A549 (cell line): ENCODE measurements at regions of chr1 and their contacts with region 1.

Region 1: DNA sequence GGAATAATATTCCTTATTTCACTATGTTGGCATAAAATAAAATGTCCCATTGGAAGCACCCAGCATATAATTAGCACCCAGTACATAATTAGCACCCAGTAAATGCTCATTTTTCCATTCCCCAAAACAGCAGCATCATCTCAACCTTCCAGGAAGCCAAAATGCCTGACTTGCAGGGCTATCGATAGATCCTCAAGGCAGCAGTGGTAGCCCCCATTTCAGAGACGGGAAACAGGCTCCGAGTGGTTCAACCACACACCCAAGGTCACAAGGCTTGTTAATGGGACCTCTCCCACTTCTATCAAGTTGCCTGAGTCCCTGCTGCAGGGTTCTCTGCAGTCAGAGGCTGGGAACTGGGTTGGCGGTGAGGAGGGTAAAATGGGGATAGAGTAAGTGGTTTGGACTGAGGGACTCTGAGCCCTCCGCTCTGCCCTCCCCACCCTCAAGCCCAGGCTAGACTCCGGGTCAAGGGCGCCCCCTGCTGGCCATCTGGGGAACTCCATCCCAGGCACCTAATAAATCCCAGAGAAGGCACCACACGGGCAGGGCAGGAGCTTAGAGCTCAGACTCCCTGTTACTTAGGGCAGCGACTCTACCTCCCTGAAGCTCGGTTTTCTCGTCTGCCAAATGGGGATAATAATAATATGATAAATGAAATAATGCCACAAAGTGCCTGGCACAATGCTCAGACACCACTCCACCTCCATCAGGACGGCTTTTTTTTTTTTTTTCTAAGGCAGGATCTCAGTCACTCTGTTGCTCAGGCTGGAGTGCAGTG is 21.9 kb upstream of the LAPTM5 start:
- DNase-seq: peak; percentile 61 to 67
- ATAC-seq: peak; percentile 75 to 87
- H3K4me3 ChIP-seq: no peak overlapping the region
- H3K27ac ChIP-seq: no peak overlapping the region
- H3K4me1 ChIP-seq: no peaks in the 10 kb centered on the region
- CTCF ChIP-seq: peak; percentile 63
- EP300 ChIP-seq: no peak
- POLR2A ChIP-seq: no peak
- RAD21 ChIP-seq: peak; percentile 67 to 72

Region 2: GRCh38 chr1:30562559-30562958 is 216.9 kb before region 1 on chr1:
- CTCF ChIA-PET with region 1: no interaction called
- POLR2A ChIA-PET with region 1: no interaction called
- DNase-seq: no peak
- ATAC-seq: no peak
- H3K4me3 ChIP-seq: no peak overlapping the region
- H3K27ac ChIP-seq: no peak overlapping the region
- H3K4me1 ChIP-seq: no peaks in the 10 kb centered on the region
- CTCF ChIP-seq: no peak
- EP300 ChIP-seq: no peak
- POLR2A ChIP-seq: no peak
- RAD21 ChIP-seq: no peak

Region 3: DNA sequence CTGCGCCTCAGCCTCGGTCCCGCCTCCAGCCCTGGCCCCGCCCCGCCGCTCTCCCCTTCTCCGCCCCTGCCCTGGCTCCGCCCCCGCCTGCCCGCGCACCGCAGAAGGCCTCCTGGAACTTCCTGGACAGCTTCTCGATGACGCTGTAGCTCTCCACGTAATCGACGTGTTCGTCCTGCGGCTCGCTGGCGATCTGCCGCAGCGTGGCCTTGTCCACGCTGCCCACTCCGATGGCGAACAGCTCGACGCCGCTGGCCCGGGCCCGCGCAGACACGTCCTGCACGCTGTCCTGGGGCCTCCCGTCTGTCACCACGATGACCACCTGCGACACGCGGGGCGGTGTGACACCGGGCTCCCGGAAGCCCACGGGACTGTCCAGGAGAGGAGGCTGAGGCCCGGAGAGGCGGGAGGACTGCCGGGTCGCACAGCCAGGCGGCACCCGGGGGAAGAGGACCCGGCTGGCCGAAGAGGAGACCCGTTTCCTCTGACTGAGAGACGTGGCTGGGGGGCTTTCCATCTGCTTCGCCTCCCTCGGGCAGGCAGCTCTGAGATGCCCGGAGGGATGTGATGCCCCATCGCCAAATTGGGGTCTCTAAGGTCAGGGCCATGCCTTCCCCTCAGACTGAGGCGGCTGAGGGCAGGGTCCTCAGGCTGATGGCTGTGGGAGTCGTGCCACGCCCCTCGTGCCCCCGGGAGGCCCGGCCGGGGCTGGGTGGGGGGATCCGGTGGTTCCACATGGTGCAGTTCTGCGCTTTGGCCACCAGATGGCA is 60.7 kb before region 1 on chr1:
- CTCF ChIA-PET with region 1: interaction called, 251 read pairs
- POLR2A ChIA-PET with region 1: interaction called, 20 read pairs
- DNase-seq: peak; percentile 66 to 94
- ATAC-seq: peak; percentile 80 to 81
- H3K4me3 ChIP-seq: peak overlapping the region; percentile 62
- H3K27ac ChIP-seq: peak overlapping the region; percentile 92 to 97
- H3K4me1 ChIP-seq: peaks cover 5% of the 10 kb centered on the region; the same call in 2 of the 3 replicates
- CTCF ChIP-seq: peak; percentile 83
- EP300 ChIP-seq: no peak
- POLR2A ChIP-seq: peak; percentile 82
- RAD21 ChIP-seq: peak in 1 of 2 experiments; percentile 89; a peak in 3 of 5 replicates

Region 4: GRCh38 chr1:30735124-30735523 is 44.4 kb before region 1 on chr1:
- CTCF ChIA-PET with region 1: interaction called, 10 read pairs
- POLR2A ChIA-PET with region 1: no interaction called
- DNase-seq: no peak
- ATAC-seq: no peak
- H3K4me3 ChIP-seq: no peak overlapping the region
- H3K27ac ChIP-seq: no peak overlapping the region
- H3K4me1 ChIP-seq: no peaks in the 10 kb centered on the region
- CTCF ChIP-seq: no peak
- EP300 ChIP-seq: no peak
- POLR2A ChIP-seq: no peak
- RAD21 ChIP-seq: no peak

Region 5: GRCh38 chr1:30757196-30757907 is 22.1 kb before region 1 on chr1 and contains the start of gene LAPTM5:
- CTCF ChIA-PET with region 1: interaction called, 23 read pairs
- POLR2A ChIA-PET with region 1: no interaction called
- DNase-seq: no peak
- ATAC-seq: no peak; a peak in 1 of 6 replicates
- H3K4me3 ChIP-seq: no peak within 1 kb of the TSS
- H3K27ac ChIP-seq: no peak within 1 kb of the TSS; a peak in 1 of 6 replicates
- H3K4me1 ChIP-seq: no peaks in the 10 kb centered on the region
- CTCF ChIP-seq: no peak
- EP300 ChIP-seq: no peak
- POLR2A ChIP-seq: no peak
- RAD21 ChIP-seq: no peak
- polyA plus RNA-seq, gene LAPTM5: 0.20 and 0.22 TPM in 2 replicates

Region 6: DNA sequence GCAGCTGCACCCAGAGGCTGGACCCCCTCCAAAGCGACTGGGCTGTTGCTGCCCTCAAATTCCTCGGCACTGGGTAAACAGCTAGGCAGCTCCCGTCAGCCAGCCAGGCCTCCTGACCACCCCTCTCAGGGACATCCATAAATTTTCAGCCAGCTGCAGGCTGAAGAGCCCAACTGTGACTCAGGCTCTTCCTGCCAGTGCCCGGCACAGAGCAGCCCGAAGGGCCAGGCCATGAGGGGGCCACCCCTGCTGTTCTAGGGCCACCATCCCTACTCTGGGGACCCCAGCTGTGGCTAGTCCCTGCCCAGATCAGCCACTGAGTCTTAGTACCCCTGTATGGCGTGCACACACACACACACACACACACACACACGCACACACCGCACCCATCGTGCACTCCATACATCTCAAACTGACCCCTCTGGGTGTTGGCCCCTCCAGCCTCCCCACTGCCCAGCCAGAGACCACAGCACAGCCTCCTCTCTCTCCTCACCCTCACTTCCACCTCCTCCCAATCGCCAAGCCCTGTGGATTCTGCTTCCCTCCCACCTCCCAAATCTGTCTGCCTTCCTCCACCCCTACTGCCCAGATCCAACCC is 15.7 kb before region 1 on chr1:
- CTCF ChIA-PET with region 1: interaction called, 23 read pairs
- POLR2A ChIA-PET with region 1: no interaction called
- DNase-seq: no peak
- ATAC-seq: no peak
- H3K4me3 ChIP-seq: no peak overlapping the region
- H3K27ac ChIP-seq: no peak overlapping the region
- H3K4me1 ChIP-seq: no peaks in the 10 kb centered on the region
- CTCF ChIP-seq: no peak
- EP300 ChIP-seq: no peak
- POLR2A ChIP-seq: no peak
- RAD21 ChIP-seq: no peak

Region 7: DNA sequence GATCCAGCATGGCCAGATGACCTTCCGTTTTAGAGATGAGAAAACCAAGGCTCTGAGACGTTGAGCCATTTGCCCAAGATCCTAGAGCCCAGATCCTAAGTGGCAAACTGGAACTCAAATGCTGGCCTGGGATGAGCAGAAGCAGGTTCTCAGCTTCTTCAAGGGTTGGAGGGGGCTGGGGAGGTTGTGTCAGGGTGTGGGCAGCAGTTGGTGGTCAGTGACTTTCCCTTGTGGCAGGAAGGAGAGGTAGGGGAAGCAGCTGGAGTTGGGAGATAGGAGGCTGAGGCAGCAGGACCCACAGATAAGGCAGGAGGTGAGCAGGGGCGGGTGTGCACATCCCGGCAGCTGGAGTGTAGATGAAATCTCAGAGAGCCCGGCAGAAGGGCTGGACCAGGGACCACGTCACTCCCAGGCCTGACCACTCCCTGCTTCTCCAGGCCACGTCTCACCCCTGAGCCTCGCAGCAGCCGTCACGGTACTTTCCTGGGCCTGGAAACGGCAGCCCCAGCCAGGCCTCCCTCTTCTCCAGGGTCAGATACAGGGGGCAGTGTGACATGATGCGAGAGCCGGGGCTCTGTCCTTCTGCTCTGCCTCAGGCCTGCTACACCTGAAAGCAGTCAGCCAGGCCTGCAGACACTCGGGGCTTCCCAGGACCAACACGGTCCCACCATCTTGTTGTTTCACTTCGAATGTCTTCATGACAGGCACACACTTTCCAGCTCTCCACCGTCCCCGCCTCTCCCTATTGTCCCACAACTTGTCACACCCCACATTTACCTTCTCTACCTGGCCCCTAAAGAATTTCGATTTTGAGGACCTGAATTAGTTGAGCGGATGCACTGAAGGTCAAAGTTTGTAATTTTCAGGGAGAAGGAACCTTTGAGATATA is 10.4 kb before region 1 on chr1:
- CTCF ChIA-PET with region 1: interaction called, 10 read pairs
- POLR2A ChIA-PET with region 1: no interaction called
- DNase-seq: no peak
- ATAC-seq: no peak
- H3K4me3 ChIP-seq: no peak overlapping the region
- H3K27ac ChIP-seq: no peak overlapping the region
- H3K4me1 ChIP-seq: no peaks in the 10 kb centered on the region
- CTCF ChIP-seq: no peak
- EP300 ChIP-seq: no peak
- POLR2A ChIP-seq: no peak
- RAD21 ChIP-seq: no peak

Region 8: GRCh38 chr1:30790850-30791778 is 11.6 kb after region 1 on chr1:
- CTCF ChIA-PET with region 1: interaction called, 32 read pairs
- POLR2A ChIA-PET with region 1: no interaction called
- DNase-seq: no peak
- ATAC-seq: no peak
- H3K4me3 ChIP-seq: no peak overlapping the region
- H3K27ac ChIP-seq: no peak overlapping the region
- H3K4me1 ChIP-seq: no peaks in the 10 kb centered on the region
- CTCF ChIP-seq: no peak
- EP300 ChIP-seq: no peak
- POLR2A ChIP-seq: no peak
- RAD21 ChIP-seq: no peak